ENCODE measurements at regions of chr1 and their contacts with region 1.

Region 1: GRCh38 chr1:20430355-20431175 is 55.4 kb downstream of the CAMK2N1 start:
- DNase-seq: peak; percentile 75
- H3K4me3 ChIP-seq: no peak overlapping the region
- H3K27ac ChIP-seq: no peak overlapping the region
- H3K4me1 ChIP-seq: peaks cover 48% of the 10 kb centered on the region
- CTCF ChIP-seq: peak; percentile 98

Region 2: GRCh38 chr1:19981507-19982312 is 448.9 kb before region 1 on chr1:
- CTCF ChIA-PET with region 1: no interaction called
- POLR2A ChIA-PET with region 1: no interaction called
- intact Hi-C with region 1: no loop called
- DNase-seq: no peak
- H3K4me3 ChIP-seq: no peak overlapping the region
- H3K27ac ChIP-seq: no peak overlapping the region
- H3K4me1 ChIP-seq: no peaks in the 10 kb centered on the region
- CTCF ChIP-seq: no peak

Region 3: GRCh38 chr1:20212685-20213331 is 217.8 kb before region 1 on chr1:
- CTCF ChIA-PET with region 1: no interaction called
- POLR2A ChIA-PET with region 1: no interaction called
- intact Hi-C with region 1: loop called (anchors 1 kb)
- DNase-seq: peak; percentile 94
- H3K4me3 ChIP-seq: peak overlapping the region; percentile 45
- H3K27ac ChIP-seq: peak overlapping the region; percentile 69
- H3K4me1 ChIP-seq: peaks cover 39% of the 10 kb centered on the region
- CTCF ChIP-seq: peak; percentile 97

Region 4: GRCh38 chr1:20233394-20233793 is 197.2 kb before region 1 on chr1:
- CTCF ChIA-PET with region 1: no interaction called
- POLR2A ChIA-PET with region 1: interaction called, 3 read pairs
- intact Hi-C with region 1: loop called (anchors 5 kb)
- DNase-seq: peak; percentile 78
- H3K4me3 ChIP-seq: no peak overlapping the region
- H3K27ac ChIP-seq: no peak overlapping the region
- H3K4me1 ChIP-seq: peaks cover 4% of the 10 kb centered on the region
- CTCF ChIP-seq: peak; percentile 85

Region 5: GRCh38 chr1:20265250-20265649 is 165.3 kb before region 1 on chr1:
- CTCF ChIA-PET with region 1: no interaction called
- POLR2A ChIA-PET with region 1: no interaction called
- intact Hi-C with region 1: loop called (anchors 5 kb)
- DNase-seq: no peak
- H3K4me3 ChIP-seq: no peak overlapping the region
- H3K27ac ChIP-seq: no peak overlapping the region
- H3K4me1 ChIP-seq: no peaks in the 10 kb centered on the region
- CTCF ChIP-seq: no peak

Region 6: GRCh38 chr1:20376880-20377494 is 53.6 kb before region 1 on chr1:
- CTCF ChIA-PET with region 1: interaction called, 3 read pairs
- POLR2A ChIA-PET with region 1: interaction called, 3 read pairs
- intact Hi-C with region 1: loop called (anchors 1 kb)
- DNase-seq: peak; percentile 81
- H3K4me3 ChIP-seq: no peak overlapping the region
- H3K27ac ChIP-seq: peak overlapping the region; percentile 5
- H3K4me1 ChIP-seq: peaks cover 60% of the 10 kb centered on the region
- CTCF ChIP-seq: peak; percentile 91

Region 7: GRCh38 chr1:20405893-20406604 is 24.5 kb before region 1 on chr1:
- CTCF ChIA-PET with region 1: no interaction called
- POLR2A ChIA-PET with region 1: interaction called, 11 read pairs
- intact Hi-C with region 1: loop called (anchors 2 kb)
- DNase-seq: peak; percentile 95
- H3K4me3 ChIP-seq: peak overlapping the region; percentile 67
- H3K27ac ChIP-seq: peak overlapping the region; percentile 99
- H3K4me1 ChIP-seq: peaks cover 87% of the 10 kb centered on the region
- CTCF ChIP-seq: no peak

Region 8: DNA sequence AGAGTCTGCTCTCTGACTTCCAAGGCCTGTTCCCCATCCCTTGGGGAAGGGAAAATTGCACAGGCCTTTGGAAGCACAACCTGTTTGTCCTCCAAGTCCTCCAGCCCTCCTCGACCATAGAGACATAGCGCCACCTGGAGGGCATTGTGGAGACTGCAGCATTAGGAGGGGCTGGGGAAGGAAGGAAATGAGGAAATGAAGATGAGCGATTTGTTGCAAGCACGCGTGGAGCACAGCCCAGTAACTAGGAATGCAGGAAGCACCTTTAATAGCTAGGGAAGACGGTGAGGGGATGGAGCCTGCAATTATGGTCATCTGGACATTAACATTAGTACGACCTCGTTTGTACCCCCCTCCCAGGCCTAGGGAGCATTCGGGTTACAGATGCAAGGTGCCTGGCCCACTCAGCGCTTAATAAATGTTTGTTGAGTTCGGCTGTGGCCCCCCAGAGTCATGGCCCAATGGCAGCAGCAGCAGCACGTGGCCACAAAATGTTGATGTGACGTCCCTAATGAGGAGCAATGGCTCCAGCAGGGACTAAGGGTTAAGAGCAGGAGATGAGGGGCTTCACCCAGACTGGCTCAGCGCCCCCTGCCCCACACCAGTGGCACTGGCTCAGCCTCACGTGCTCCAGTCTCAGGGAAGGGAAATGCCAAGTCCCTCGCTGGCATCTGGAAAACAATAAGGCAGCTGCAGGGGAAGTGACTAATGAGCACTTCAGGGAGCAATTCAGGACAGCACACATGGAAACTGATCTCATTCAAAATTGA is 63.5 kb after region 1 on chr1:
- CTCF ChIA-PET with region 1: no interaction called
- POLR2A ChIA-PET with region 1: no interaction called
- intact Hi-C with region 1: loop called (anchors 2 kb)
- DNase-seq: peak; percentile 83
- H3K4me3 ChIP-seq: no peak overlapping the region
- H3K27ac ChIP-seq: no peak overlapping the region
- H3K4me1 ChIP-seq: peaks cover 21% of the 10 kb centered on the region
- CTCF ChIP-seq: peak; percentile 98

Measured in OCI-LY7 (cell line).